CD8-positive, alpha-beta T cell (primary cell): ENCODE measurements at regions of chrX and their contacts with region 1.

Region 1: GRCh38 chrX:43557792-43558191 is 98.3 kb upstream of the MAOA start:
- DNase-seq: peak; percentile 29 to 78 (median 59)
- ATAC-seq: peak; percentile 44
- H3K4me3 ChIP-seq: no peak overlapping the region
- H3K4me3 Mint-ChIP-seq: no peak overlapping the region
- H3K27ac ChIP-seq: no peak overlapping the region
- H3K27ac Mint-ChIP-seq: no peak overlapping the region
- H3K4me1 ChIP-seq: peaks cover 4% of the 10 kb centered on the region
- H3K4me1 Mint-ChIP-seq: peaks cover 4% of the 10 kb centered on the region
- H3K27me3 ChIP-seq: no peaks in the 10 kb centered on the region
- H3K27me3 Mint-ChIP-seq: no peaks in the 10 kb centered on the region
- CTCF ChIP-seq: peak; percentile 56

Region 2: GRCh38 chrX:41558531-41558930 is 1999.3 kb before region 1 on chrX:
- CTCF ChIA-PET with region 1: no interaction called
- POLR2A ChIA-PET with region 1: no interaction called
- intact Hi-C with region 1: loop called (anchors 2 to 5 kb)
- DNase-seq: peak in 2 of 9 experiments; percentile 35 to 50
- ATAC-seq: no peak
- H3K4me3 ChIP-seq: no peak overlapping the region
- H3K4me3 Mint-ChIP-seq: no peak overlapping the region
- H3K27ac ChIP-seq: no peak overlapping the region
- H3K27ac Mint-ChIP-seq: no peak overlapping the region
- H3K4me1 ChIP-seq: peaks cover 28% of the 10 kb centered on the region
- H3K4me1 Mint-ChIP-seq: peaks cover 48% of the 10 kb centered on the region
- H3K27me3 ChIP-seq: no peaks in the 10 kb centered on the region
- H3K27me3 Mint-ChIP-seq: no peaks in the 10 kb centered on the region
- CTCF ChIP-seq: no peak

Region 3: GRCh38 chrX:41796577-41796976 is 1761.2 kb before region 1 on chrX:
- CTCF ChIA-PET with region 1: interaction called, 4 read pairs
- POLR2A ChIA-PET with region 1: no interaction called
- intact Hi-C with region 1: loop called (anchors 1 to 5 kb)
- DNase-seq: peak in 2 of 9 experiments; percentile 8
- ATAC-seq: no peak
- H3K4me3 ChIP-seq: no peak overlapping the region
- H3K4me3 Mint-ChIP-seq: no peak overlapping the region
- H3K27ac ChIP-seq: no peak overlapping the region
- H3K27ac Mint-ChIP-seq: peak overlapping the region; percentile 56
- H3K4me1 ChIP-seq: peaks cover 13% of the 10 kb centered on the region
- H3K4me1 Mint-ChIP-seq: peaks cover 37% of the 10 kb centered on the region
- H3K27me3 ChIP-seq: no peaks in the 10 kb centered on the region
- H3K27me3 Mint-ChIP-seq: no peaks in the 10 kb centered on the region
- CTCF ChIP-seq: no peak

Region 4: DNA sequence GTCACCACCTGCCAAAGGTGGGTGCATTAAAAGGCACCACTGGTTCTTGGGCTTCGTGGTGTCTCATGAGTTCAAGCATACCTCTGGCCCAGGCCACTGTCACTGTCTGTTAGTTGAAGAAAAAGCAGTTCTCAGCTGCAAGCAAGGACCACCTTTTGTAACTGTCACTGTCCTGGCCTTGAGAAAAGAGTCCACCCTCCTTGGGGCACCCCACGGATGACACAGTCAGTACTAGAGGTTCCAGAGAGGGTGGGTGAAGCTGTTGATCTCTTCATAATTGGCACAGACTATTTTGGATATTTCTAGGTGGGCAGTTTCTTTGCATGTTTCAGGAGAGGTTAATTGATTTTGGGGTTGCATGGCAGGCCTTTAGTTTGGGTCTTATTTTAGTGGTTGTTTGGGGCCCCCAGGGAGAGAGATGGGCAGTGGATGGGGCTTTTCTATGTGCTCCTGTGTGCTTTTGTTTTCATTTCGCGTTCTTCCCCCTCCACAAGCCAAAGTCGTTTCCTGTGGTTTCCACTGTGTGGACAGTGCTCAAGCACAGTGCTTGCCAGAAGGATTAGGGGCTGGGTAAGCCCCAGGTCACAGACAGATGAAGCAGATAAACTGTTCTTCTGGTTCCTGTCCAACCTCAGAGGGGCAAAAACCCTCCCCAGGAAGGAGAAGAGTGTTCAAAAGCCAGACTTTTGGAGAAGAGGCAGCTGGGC is 623.6 kb before region 1 on chrX:
- CTCF ChIA-PET with region 1: interaction called, 3 read pairs
- POLR2A ChIA-PET with region 1: no interaction called
- intact Hi-C with region 1: loop called in 1 of 2 experiments (anchors 10 kb)
- DNase-seq: peak in 6 of 9 experiments; percentile 11 to 67 (median 44)
- ATAC-seq: peak; percentile 48
- H3K4me3 ChIP-seq: no peak overlapping the region
- H3K4me3 Mint-ChIP-seq: peak overlapping the region; percentile 42
- H3K27ac ChIP-seq: peak overlapping the region in 1 of 2 experiments; percentile 57
- H3K27ac Mint-ChIP-seq: peak overlapping the region; percentile 85
- H3K4me1 ChIP-seq: peaks cover 29% of the 10 kb centered on the region
- H3K4me1 Mint-ChIP-seq: peaks cover 25% of the 10 kb centered on the region
- H3K27me3 ChIP-seq: no peaks in the 10 kb centered on the region
- H3K27me3 Mint-ChIP-seq: no peaks in the 10 kb centered on the region
- CTCF ChIP-seq: no peak

Region 5: DNA sequence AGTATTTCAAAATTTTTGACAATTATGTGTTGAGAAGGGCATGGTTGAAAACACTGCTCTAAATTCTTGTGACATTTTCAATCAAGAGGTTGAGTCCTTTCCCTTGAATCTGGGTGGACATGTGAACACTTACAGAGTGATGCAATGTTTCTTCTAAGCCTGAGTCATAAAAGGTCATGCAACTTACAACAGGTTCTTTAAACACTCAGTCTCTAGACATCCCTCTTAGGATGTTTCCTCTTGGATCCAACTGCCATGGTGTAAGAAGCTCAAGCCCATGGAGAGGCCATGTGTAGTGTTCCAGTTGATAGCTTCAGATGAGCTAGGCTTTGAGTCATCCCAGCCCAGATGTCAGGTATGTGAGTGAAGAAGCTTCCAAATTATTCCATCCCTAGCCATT is 133.9 kb before region 1 on chrX:
- CTCF ChIA-PET with region 1: no interaction called
- POLR2A ChIA-PET with region 1: no interaction called
- intact Hi-C with region 1: no loop called
- DNase-seq: no peak
- ATAC-seq: no peak
- H3K4me3 ChIP-seq: no peak overlapping the region
- H3K4me3 Mint-ChIP-seq: no peak overlapping the region
- H3K27ac ChIP-seq: no peak overlapping the region
- H3K27ac Mint-ChIP-seq: no peak overlapping the region
- H3K4me1 ChIP-seq: no peaks in the 10 kb centered on the region
- H3K4me1 Mint-ChIP-seq: no peaks in the 10 kb centered on the region
- H3K27me3 ChIP-seq: no peaks in the 10 kb centered on the region
- H3K27me3 Mint-ChIP-seq: no peaks in the 10 kb centered on the region
- CTCF ChIP-seq: no peak

Region 6: DNA sequence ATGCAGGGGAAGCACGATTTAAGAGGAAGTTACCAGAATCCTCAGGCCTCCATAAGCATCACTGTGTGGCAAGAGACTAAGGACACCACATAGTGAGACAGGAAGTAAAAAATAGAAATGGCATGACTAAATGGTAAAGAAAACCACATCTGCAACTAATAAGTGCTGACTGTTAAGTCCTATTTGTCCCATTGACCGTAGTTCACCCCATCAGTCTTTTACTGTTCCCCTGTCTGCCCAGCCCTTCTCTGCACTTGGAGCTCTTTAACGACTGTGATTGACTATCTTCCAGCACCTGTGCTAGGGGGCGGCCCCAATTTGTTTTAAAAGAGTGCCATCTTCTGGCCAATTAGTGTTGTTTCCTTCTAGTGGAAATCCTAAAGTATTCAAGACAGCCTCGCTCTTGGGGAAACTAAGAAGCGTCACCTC is 192.5 kb after region 1 on chrX:
- CTCF ChIA-PET with region 1: interaction called, 19 read pairs
- POLR2A ChIA-PET with region 1: no interaction called
- intact Hi-C with region 1: loop called in 1 of 2 experiments (anchors 1 kb)
- DNase-seq: peak in 8 of 9 experiments; percentile 3 to 67 (median 43)
- ATAC-seq: peak; percentile 68
- H3K4me3 ChIP-seq: no peak overlapping the region
- H3K4me3 Mint-ChIP-seq: no peak overlapping the region
- H3K27ac ChIP-seq: no peak overlapping the region
- H3K27ac Mint-ChIP-seq: no peak overlapping the region
- H3K4me1 ChIP-seq: no peaks in the 10 kb centered on the region
- H3K4me1 Mint-ChIP-seq: peaks cover 4% of the 10 kb centered on the region
- H3K27me3 ChIP-seq: no peaks in the 10 kb centered on the region
- H3K27me3 Mint-ChIP-seq: no peaks in the 10 kb centered on the region
- CTCF ChIP-seq: peak; percentile 28